Calu3 (cell line): ENCODE measurements at regions of chr3 and their contacts with region 1.

Region 1: DNA sequence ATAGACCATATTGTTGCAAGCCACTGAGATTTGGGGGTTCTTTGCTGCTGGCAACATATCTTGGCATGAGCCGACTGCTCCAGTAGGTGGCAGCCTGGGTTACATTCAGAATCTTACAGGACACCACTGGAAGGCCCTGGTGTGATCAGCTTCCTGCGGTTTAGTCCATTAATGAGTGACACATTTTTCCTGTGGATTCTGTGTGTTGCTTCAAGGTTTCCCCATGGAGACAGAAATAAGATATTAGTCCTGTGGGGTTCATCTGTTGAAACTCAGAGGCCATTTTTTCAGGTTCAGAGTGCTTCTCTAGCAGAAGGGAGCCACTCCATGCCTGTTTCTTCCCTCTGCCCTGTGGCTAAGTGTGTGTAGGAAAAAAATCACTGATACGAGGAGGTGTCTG is 116.2 kb downstream of the MFSD1 start:
- DNase-seq: peak; percentile 89
- H3K4me3 Mint-ChIP-seq: no peak overlapping the region
- H3K27ac Mint-ChIP-seq: peak overlapping the region; percentile 16
- H3K4me1 Mint-ChIP-seq: peaks cover 9% of the 10 kb centered on the region
- H3K27me3 Mint-ChIP-seq: peaks cover 10% of the 10 kb centered on the region
- CTCF ChIP-seq: peak; percentile 94

Region 2: GRCh38 chr3:158845765-158846350 is 72.2 kb before region 1 on chr3:
- CTCF ChIA-PET with region 1: interaction called, 3 read pairs
- intact Hi-C with region 1: loop called (anchors 1 kb)
- DNase-seq: peak; percentile 65
- H3K4me3 Mint-ChIP-seq: no peak overlapping the region
- H3K27ac Mint-ChIP-seq: no peak overlapping the region
- H3K4me1 Mint-ChIP-seq: no peaks in the 10 kb centered on the region
- H3K27me3 Mint-ChIP-seq: no peaks in the 10 kb centered on the region
- CTCF ChIP-seq: peak; percentile 93

Region 3: DNA sequence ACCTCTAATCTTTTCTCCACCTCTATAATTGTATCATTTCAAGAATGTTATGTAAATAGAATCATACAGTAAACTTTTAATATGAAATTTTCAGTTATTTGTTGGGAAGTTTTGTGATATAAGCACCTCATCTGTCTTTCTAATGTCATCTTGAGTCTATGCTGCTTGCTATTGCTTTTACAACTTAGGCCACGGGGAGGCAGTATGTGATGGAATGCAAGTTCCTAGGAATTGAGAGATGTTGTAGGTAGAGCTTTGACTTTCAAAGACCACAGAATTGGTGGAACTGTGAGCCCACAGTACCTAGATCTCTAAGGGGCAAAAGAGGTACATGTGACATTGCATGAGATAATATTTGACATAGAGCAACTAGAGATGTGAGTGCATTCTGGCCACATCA is 212.1 kb after region 1 on chr3:
- CTCF ChIA-PET with region 1: no interaction called
- intact Hi-C with region 1: loop called (anchors 1 kb)
- DNase-seq: peak; percentile 63
- H3K4me3 Mint-ChIP-seq: no peak overlapping the region
- H3K27ac Mint-ChIP-seq: peak overlapping the region; percentile 25
- H3K4me1 Mint-ChIP-seq: peaks cover 47% of the 10 kb centered on the region
- H3K27me3 Mint-ChIP-seq: no peaks in the 10 kb centered on the region
- CTCF ChIP-seq: peak; percentile 34

Region 4: DNA sequence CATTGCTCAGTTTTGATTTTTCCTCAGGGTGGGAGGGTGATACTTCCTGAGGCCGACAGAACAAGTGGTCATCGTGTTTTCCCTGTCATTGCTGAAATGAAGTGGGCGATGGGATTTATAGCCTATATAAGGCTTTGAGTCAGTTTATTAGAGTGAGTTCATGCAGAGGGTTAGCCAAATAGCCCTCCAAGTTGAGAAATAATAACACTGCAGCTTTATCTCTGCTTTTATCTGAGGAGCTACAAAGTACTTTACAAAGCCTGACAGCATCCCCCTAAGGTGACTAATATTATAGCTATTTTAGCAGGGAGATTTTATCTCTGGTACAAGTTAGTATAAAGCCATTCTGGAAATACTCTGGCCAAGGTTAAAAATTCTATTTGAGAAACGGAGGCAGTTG is 273.4 kb after region 1 on chr3:
- CTCF ChIA-PET with region 1: interaction called, 7 read pairs
- intact Hi-C with region 1: loop called (anchors 1 kb)
- DNase-seq: no peak
- H3K4me3 Mint-ChIP-seq: no peak overlapping the region
- H3K27ac Mint-ChIP-seq: no peak overlapping the region
- H3K4me1 Mint-ChIP-seq: peaks cover 19% of the 10 kb centered on the region
- H3K27me3 Mint-ChIP-seq: no peaks in the 10 kb centered on the region
- CTCF ChIP-seq: no peak